Right ventricle myocardium superior (tissue), 1 donor: ENCODE measurements at regions of chr1 and their contacts with region 1.

Region 1: DNA sequence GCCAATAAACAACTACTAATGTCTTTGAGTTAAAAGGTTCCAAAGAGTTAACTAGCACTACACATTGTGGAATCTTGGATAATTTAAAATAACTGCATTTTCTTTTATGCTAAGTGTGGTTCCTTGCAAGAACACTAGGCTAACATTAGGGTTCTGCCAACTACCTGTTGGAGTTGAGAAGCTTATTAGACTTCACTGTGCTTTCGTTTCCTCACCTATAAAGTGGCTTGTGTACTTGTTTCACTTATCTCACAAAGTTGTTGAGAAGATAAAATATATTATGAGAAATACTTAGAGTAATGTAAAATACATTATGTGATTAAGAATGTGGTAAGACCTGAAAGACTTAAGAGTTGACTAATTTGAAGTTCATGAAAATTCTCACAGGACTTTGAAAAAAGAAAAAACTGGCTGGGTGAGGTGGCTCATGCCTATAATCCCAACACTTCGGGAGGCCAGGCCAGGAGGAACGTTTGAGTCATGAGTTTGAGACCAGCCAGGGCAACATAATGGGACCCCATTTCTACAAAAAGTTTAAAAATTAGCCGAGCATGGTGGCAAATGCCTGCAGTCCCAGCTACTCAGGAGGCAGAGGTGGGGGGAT is 5.6 kb upstream of the RRAGC start:
- DNase-seq: no peak
- ATAC-seq: no peak

Region 2: DNA sequence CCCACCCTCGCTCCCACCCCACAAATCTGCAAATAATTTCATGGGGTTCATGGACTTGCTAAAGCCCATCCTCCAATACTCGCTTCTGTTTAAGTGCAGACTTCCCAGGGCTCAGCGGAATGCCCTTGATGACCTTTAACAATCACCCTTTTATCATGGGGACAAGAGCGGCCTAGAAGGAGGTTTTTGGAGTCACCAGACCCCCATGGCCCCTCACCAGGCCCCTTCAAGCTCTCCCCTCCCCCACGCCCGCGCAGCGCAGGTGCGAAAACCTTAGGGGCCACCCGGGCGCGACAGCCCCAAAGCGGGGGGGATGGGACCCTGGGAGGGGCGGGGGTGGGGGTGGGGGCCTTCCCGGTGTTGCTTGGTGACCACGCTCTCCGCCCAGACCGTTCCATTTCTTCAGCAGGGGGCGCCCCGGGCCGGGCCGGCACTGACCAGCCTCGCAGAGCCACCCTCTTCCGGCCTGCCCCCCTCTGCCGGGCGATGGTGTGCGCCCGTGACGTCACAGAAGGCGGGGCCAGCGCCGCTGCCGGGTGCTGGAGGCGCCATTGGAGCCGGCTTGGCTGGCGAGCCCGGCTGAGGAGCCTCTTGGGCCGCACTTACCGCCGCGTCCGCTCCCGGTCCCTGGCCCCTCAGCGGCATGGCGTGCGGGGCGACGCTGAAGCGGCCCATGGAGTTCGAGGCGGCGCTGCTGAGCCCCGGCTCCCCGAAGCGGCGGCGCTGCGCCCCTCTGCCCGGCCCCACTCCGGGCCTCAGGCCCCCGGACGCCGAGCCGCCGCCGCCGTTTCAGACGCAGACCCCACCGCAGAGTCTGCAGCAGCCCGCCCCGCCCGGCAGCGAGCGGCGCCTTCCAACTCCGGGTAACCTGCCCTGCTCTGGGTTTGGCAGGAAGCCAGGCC is 125.8 kb after region 1 on chr1 and contains the start of gene AKIRIN1:
- intact Hi-C with region 1: loop called (anchors 5 kb)
- DNase-seq: peak; percentile 99
- ATAC-seq: peak; percentile 98
- total RNA-seq, gene AKIRIN1: 56.8 TPM